Right ventricle myocardium inferior (tissue), 1 donor: ENCODE measurements at regions of chr10 and their contacts with region 1.

Region 1: DNA sequence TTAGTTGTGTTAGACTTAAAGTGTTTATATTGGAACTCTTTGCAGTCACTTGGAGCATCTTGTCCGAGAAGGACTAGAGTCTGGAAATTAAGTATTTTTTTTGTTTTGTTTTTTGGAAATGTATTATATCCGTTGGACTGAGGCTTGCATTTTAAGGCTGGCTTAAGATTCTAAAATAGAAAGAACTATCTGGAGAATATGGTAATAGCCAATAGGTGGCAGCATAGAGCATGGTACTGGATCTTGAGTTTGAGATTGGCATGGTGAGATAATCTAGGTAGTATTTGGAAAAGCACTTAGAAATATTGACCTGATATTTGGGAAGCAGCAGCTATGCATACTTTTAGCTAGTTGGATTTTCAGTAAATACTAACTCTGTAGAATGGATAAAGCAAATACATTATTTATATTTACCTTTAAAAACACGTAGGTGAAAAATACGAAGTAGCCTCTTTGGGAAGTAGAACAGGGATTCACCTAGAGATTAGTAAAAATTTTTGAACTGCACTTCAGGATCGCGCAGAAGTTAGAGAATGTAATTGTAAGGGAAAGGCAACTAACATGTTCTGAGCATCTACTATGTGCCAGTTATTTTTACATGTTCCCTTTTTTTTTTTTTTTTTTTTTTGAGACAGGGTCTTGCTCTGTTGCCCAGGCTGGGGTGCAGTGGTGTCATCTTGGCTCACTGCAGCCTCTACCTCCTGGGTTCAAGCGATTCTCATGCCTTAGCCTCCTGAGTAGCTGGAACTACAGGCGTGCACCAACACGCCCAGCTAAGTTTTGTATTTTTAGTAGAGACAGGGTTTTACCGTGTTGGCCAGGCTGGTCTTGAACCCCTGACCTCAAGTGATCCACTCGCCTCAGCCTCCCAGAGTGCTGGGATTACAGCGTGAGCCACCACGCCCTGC is 78.6 kb downstream of the LCOR start:
- DNase-seq: no peak
- ATAC-seq: no peak

Region 2: GRCh38 chr10:96831867-96832720 is 78.6 kb before region 1 on chr10 and contains the start of gene LCOR:
- intact Hi-C with region 1: loop called (anchors 5 kb)
- DNase-seq: peak; percentile 93
- ATAC-seq: peak; percentile 91
- total RNA-seq, gene LCOR: 21.7 TPM

Region 3: DNA sequence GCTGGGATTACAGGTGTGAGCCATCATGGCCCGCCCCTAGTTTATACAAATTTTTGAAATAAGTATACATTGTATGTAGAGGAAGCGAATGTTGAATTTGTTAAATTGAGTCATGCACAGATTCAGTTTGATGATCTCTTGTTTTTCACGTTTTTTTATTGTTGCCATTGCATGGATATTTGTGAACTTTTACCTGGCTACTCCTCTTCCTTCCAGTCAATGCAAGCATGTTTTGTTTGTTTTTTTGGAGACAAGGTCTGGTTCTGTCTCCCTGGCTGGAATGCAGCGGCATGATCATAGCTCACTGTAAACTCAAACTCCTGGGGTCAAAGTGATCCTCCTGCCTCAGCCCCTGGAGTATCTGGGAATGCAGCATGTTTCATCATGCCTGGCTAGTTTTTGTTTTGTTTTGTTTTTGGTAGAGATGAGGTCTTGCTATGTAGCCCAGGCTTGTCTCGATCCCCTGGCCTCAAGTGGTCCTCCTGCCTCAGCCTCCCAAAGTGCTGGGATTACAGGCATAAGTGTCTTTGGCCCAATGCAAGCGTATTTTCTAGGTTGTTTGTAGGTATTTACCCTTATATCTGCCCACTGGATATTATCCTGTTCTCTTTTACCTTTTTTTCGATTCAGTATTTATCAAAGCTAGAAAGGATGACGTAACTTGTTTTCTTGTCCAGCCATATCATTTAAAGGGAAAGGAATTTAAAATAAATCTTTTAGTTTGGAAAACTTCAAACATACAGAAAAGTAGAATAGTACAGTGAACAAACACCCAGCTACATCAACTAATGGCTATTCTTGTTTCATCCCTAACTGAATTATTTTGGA is 67.6 kb before region 1 on chr10:
- intact Hi-C with region 1: no loop called
- DNase-seq: no peak
- ATAC-seq: no peak

Region 4: GRCh38 chr10:97048649-97049427 is 138.1 kb after region 1 on chr10:
- intact Hi-C with region 1: no loop called
- DNase-seq: no peak
- ATAC-seq: no peak